GM13976 (cell line): ENCODE measurements at regions of chr12 and their contacts with region 1.

Region 1: DNA sequence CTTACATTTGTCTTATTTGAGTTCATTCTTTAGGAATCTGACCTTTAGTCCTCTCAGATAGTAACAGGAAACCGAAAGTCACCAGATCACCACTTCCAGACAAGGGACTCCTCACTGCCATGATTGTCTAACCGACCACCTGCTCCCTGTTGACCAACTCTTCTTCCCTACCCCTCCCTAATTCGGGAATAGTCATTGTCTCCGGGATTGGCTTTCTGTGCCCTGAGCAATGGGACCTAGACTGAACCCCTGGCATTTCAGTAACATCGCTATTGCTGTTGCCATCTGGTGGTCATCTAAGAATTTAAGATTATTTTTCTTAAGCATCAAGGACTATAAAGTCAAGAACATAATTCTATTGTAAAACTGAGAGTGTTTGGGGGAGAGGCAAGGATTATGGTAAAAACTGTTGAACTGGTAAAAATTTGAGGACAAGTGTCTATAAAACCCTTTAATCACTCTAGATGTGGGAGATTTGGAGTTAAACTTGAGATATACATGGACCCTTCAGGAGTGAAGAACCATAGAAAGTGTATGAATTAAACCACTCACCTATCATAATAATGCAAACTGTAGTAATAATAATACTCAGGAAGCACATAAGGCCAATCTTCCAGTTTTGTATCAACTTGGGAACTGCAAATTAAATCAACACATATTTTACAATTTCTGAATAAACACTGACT is 6.3 kb downstream of the CLEC2A start:
- DNase-seq: no peak
- CTCF ChIP-seq: peak; percentile 50

Region 2: DNA sequence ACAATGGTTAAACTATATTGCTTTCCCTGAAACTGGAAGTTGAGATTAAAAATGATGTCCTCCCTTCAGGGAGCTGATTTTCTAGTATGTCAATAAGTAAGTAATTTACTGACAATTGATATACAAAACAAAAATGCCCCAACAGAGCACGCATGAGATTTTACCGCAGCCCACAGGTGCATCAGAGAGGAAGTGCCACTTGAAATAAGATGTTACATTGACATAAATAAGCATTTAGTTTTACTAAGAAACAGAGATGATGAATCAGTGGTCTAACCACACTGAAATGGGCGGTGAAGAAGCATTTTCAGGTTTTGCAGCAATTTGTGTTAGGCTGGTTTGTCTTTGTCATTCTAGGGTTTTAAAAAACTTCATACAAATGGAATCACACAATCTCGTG is 184.1 kb before region 1 on chr12:
- in situ Hi-C with region 1: loop called (anchors 10 kb)
- DNase-seq: peak; percentile 48
- CTCF ChIP-seq: no peak

Region 3: DNA sequence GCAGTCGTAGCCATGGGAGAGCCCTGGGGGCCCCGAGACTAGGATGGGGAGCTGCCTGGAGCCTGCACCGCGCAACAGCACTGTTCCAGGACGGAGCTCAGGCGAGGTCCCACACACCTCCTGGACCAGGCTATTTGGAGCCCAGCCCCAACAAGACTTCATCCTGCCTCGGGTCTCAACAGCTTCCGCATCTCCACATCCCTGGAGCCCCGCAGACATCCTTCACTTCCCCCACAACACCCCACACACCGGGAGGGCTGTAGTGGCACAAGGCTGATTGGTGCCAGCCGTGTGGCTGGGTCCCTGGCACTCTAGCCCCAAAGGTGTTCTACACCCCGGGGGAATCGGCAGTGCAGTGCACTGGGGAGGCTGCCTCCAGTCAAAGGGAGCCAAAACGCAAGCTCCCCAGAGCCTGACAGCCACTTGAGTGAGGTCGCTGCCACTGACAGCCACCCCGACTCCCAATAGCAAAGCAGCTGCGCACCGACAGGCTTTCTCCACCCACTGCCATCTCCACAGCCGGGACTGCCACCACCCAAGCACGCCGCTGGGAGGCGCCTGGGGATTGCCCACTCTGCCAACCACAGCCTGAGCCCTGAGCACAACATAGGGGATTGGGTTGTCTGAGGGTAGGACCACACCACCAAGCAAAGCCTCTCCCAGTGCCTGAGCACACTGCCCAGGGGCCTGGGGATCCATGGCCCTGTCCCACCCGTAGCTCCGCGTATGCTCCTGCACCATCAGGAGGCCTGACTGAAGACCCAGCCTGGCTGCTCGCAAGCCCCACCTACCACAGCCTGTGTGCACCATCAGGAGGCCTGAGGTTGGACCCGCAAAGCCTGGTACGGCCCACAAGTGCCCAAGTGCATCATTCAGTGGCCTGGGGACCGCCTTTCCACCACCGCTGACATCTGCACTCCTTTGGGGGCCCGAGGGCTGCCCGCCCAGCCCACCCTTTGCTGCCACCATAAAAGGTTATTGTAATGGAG is 111.7 kb before region 1 on chr12:
- in situ Hi-C with region 1: loop called (anchors 10 kb)
- DNase-seq: peak; percentile 94
- CTCF ChIP-seq: peak; percentile 91